ENCODE measurements at regions of chr1 and their contacts with region 1.

Region 1: DNA sequence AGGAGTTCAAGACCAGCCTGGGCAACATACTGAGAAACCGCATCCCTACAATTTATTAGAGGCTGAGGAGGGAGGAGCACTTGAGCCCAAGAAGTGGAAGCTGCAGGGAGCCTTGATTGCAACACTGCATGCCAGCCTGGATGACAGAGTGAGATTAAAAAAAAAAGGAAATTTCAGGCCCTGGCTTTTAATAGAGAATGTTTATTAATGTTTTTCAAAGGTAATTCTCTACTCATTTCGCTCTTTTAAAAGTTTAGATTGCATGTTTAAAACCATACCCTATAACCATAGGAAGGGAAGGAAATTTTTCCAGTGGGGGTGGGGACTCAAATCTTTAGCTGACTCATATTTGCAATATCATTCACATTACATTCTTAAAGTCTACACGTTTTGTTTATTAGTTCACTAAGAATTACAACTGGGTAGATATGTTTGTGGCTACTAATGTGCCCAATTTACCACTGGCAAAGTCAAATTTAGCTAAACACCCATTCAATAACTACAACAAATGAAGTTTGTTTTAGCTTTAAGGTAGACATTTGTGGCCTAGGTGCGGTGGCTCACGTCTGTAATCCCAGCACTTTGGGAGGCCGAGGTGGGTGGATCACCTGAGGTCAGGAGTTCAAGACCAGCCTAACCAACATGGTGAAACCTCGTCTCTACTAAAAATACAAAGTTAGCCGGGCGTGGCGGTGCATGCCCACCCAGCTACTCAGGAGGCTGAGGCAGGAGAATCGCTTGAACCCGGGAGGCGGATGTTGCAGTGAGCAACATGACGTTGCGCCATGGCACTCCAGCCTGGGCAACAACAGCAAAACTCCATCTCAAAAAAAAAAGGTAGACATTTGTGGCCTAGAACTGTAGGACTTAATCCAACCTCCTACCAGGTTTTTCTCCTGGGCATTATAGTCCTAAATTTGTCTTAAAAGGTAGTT is 5.0 kb downstream of the KDM5B start:
- DNase-seq: no peak
- ATAC-seq: no peak
- H3K4me3 ChIP-seq: no peak overlapping the region
- H3K4me3 Mint-ChIP-seq: no peak overlapping the region
- H3K27ac ChIP-seq: no peak overlapping the region
- H3K27ac Mint-ChIP-seq: peak overlapping the region in 1 of 9 donors; percentile 25
- H3K4me1 ChIP-seq: peaks cover 9 to 16% of the 10 kb centered on the region in 2 donors
- H3K4me1 Mint-ChIP-seq: peaks cover 19 to 56% (median 44%) of the 10 kb centered on the region in 7 donors
- H3K27me3 ChIP-seq: no peaks in the 10 kb centered on the region
- H3K27me3 Mint-ChIP-seq: no peaks in the 10 kb centered on the region

Region 2: GRCh38 chr1:202671122-202671797 is 132.0 kb before region 1 on chr1:
- CTCF ChIA-PET with region 1: no interaction called
- POLR2A ChIA-PET with region 1: no interaction called
- intact Hi-C with region 1: no loop called
- DNase-seq: no peak
- ATAC-seq: no peak
- H3K4me3 ChIP-seq: no peak overlapping the region
- H3K4me3 Mint-ChIP-seq: no peak overlapping the region
- H3K27ac ChIP-seq: no peak overlapping the region
- H3K27ac Mint-ChIP-seq: no peak overlapping the region
- H3K4me1 ChIP-seq: no peaks in the 10 kb centered on the region
- H3K4me1 Mint-ChIP-seq: peaks cover 0 to 6% (median 0%) of the 10 kb centered on the region in 7 donors
- H3K27me3 ChIP-seq: no peaks in the 10 kb centered on the region
- H3K27me3 Mint-ChIP-seq: peaks cover 4 to 13% (median 12%) of the 10 kb centered on the region in 5 donors

Region 3: GRCh38 chr1:202835548-202836090 is 32.4 kb after region 1 on chr1:
- CTCF ChIA-PET with region 1: no interaction called
- POLR2A ChIA-PET with region 1: no interaction called
- intact Hi-C with region 1: loop called in 1 of 2 experiments (anchors 5 kb)
- DNase-seq: peak in 2 of 9 donors; percentile 12 to 45
- ATAC-seq: peak; percentile 77
- H3K4me3 ChIP-seq: no peak overlapping the region
- H3K4me3 Mint-ChIP-seq: peak overlapping the region in 3 of 10 donors; percentile 9 to 84 (median 48)
- H3K27ac ChIP-seq: no peak overlapping the region
- H3K27ac Mint-ChIP-seq: peak overlapping the region in 2 of 9 donors; percentile 43 to 87
- H3K4me1 ChIP-seq: peaks cover 20% of the 10 kb centered on the region in 2 donors
- H3K4me1 Mint-ChIP-seq: peaks cover 10 to 60% (median 28%) of the 10 kb centered on the region in 7 donors
- H3K27me3 ChIP-seq: no peaks in the 10 kb centered on the region
- H3K27me3 Mint-ChIP-seq: peaks cover 0 to 4% (median 0%) of the 10 kb centered on the region in 5 donors

Region 4: GRCh38 chr1:202938287-202938925 is 135.1 kb after region 1 on chr1:
- CTCF ChIA-PET with region 1: no interaction called
- POLR2A ChIA-PET with region 1: no interaction called
- intact Hi-C with region 1: no loop called
- DNase-seq: no peak
- ATAC-seq: no peak
- H3K4me3 ChIP-seq: no peak overlapping the region
- H3K4me3 Mint-ChIP-seq: no peak overlapping the region
- H3K27ac ChIP-seq: no peak overlapping the region
- H3K27ac Mint-ChIP-seq: no peak overlapping the region
- H3K4me1 ChIP-seq: no peaks in the 10 kb centered on the region
- H3K4me1 Mint-ChIP-seq: no peaks in the 10 kb centered on the region
- H3K27me3 ChIP-seq: no peaks in the 10 kb centered on the region
- H3K27me3 Mint-ChIP-seq: peaks cover 5 to 20% (median 15%) of the 10 kb centered on the region in 5 donors

Measured in naive thymus-derived CD4-positive, alpha-beta T cell (primary cell).